Adrenal gland (tissue), 19 donors: ENCODE measurements at regions of chr10 and their contacts with region 1.

Region 1: GRCh38 chr10:97731346-97732051 is 5.4 kb upstream of the ZFYVE27 start:
- DNase-seq: peak; percentile 68 to 90 (median 72)
- H3K4me3 ChIP-seq: no peak overlapping the region
- H3K27ac ChIP-seq: no peak overlapping the region
- H3K4me1 ChIP-seq: no peaks in the 10 kb centered on the region
- H3K27me3 ChIP-seq: no peaks in the 10 kb centered on the region
- CTCF ChIP-seq: peak; percentile 65 to 95 (median 92)
- POLR2A ChIP-seq: no peak

Region 2: DNA sequence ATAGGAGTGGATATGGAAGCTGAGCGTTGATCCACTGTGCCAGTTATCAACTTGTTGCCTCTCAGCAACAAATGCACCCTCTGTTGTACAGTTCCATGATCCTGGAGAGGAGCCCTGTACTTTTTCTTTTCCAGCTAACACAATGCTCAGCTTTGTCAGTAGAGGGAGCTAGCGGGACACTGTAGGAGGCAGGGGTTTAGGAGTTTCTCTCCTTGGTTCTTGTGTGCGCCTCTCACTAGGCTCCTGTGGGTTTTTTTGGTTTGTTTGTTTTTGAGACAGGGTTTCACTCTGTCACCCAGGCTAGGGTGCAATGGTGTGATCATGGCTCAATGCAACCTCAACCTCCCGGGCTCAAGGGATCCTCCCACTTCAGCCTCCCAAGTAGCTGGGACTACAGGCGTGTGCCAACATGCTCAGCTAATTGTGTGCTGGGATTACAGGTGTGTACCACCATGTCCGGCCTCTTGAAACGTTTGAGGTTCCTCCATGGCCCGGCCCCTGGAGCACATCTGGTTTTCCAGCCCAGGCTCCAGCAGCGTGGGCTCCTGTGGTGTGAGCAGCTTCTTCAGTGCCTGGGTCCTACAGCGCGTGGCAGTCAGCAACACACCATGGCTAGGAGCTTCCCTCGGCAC is 29.9 kb before region 1 on chr10:
- intact Hi-C with region 1: loop called in 1 of 2 experiments (anchors 5 kb)
- DNase-seq: peak; percentile 52 to 76 (median 68)
- H3K4me3 ChIP-seq: no peak overlapping the region
- H3K27ac ChIP-seq: no peak overlapping the region
- H3K4me1 ChIP-seq: no peaks in the 10 kb centered on the region
- H3K27me3 ChIP-seq: no peaks in the 10 kb centered on the region
- CTCF ChIP-seq: peak; percentile 69 to 89 (median 79)
- POLR2A ChIP-seq: no peak

Region 3: DNA sequence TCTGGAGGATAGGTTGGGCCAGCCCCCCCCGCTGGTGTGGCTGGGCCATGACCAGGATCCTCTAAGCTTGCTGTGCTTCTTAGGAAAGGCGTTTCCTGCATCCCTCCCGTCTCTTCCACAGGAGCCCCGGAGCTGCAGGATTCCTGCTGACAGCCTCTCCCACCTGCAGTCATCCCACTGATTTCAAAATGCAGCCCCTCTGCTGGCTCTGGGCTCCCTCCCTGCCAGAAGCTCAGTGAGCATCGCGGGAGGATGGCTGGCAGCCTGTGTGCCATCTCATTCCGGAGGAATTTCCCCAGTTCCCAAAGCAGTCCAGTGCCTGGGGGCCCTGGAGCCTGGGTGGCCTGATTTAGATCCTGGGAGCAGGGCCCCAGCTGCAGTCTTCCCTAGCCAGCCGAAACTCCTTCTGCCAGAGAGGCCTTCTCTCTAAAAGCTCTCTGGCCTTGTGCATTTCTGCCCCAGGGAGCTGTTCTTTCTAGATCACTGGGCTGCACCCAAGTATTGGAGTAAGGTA is 96.3 kb after region 1 on chr10:
- intact Hi-C with region 1: no loop called
- DNase-seq: no peak
- H3K4me3 ChIP-seq: no peak overlapping the region
- H3K27ac ChIP-seq: no peak overlapping the region
- H3K4me1 ChIP-seq: no peaks in the 10 kb centered on the region
- H3K27me3 ChIP-seq: no peaks in the 10 kb centered on the region
- CTCF ChIP-seq: no peak
- POLR2A ChIP-seq: no peak